ENCODE measurements at regions of chr2 and their contacts with region 1.

Region 1: DNA sequence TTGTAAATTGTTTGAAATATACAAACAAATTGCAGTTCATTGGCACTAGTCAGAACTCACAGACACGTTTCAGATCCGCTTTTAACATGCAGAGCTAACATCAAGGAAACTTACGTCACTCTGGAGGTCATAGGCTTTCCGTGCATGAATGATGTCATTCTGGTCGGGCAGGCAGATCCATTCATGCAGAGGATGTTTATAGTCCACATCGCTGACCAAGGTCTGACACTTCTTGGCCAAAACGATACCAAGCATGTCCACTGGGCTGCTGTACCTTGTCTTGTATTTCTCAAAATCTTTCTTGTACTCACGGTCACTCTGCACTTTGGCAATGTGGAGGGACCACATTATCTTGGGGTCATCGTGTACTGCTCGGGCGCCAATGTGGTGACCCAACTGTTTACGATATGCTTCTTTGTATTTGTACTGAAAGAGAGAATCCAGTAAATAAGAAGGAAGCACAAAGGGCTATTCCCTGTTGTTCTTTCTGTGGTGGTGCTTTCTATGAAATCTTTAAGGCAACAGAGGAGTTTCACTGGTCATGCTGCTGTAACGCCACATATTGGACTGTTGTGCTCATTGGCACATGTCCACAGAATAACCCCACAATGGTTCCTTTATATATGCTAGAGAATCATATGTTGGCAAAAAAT is 114.8 kb downstream of the NEB start:
- DNase-seq: no peak
- H3K4me3 ChIP-seq: no peak overlapping the region
- H3K27ac ChIP-seq: no peak overlapping the region
- H3K4me1 ChIP-seq: no peaks in the 10 kb centered on the region
- H3K27me3 ChIP-seq: no peaks in the 10 kb centered on the region
- CTCF ChIP-seq: no peak
- EP300 ChIP-seq: no peak
- POLR2A ChIP-seq: no peak

Region 2: DNA sequence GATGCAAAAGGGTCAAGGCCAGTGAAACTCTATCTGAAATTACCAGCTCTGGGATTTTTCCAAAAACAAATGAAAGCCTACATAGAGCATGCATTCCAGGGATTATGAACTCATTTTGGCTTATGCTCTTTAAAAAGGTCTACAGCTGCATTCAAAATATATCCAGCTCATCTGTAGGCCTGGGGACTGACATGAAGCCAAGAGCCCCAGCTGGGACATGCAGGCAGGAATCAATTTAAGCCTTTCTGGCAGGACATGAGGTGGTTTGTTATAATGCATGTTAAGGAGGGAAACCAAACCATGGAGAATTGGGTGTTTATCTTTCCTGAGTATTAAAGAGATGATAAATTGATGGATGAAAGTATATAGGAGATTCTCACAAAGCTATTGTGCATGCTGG is 522.3 kb before region 1 on chr2:
- in situ Hi-C with region 1: no loop called
- intact Hi-C with region 1: no loop called
- DNase-seq: no peak
- H3K4me3 ChIP-seq: no peak overlapping the region
- H3K27ac ChIP-seq: no peak overlapping the region
- H3K4me1 ChIP-seq: no peaks in the 10 kb centered on the region
- H3K27me3 ChIP-seq: no peaks in the 10 kb centered on the region
- CTCF ChIP-seq: no peak
- EP300 ChIP-seq: no peak
- POLR2A ChIP-seq: no peak

Region 3: DNA sequence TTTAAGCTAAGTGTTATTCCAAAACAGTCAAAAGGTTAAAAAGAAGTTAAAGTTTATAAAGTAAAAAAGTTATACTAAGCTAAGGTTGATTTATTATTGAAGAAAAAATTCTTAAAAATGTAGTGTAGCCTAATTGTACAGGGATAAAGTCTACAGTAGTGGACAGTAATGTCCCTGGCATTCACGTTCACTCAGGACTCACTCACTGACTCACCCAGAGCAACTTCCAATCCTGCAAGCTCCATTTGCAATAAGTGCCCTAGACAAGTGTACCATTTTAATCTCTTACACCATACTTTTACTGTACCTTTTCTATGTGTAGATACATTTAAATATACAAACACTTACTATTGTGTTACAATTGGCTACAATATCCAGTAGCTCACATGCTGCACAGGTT is 393.2 kb after region 1 on chr2:
- in situ Hi-C with region 1: loop called in 2 of 4 experiments (anchors 25 kb)
- intact Hi-C with region 1: no loop called
- DNase-seq: no peak
- H3K4me3 ChIP-seq: no peak overlapping the region
- H3K27ac ChIP-seq: no peak overlapping the region
- H3K4me1 ChIP-seq: no peaks in the 10 kb centered on the region
- H3K27me3 ChIP-seq: no peaks in the 10 kb centered on the region
- CTCF ChIP-seq: no peak
- EP300 ChIP-seq: no peak
- POLR2A ChIP-seq: no peak